ENCODE measurements at regions of chr2 and their contacts with region 1.

Region 1: GRCh38 chr2:176140513-176141317 is 10.6 kb upstream of the HOXD4 start:
- DNase-seq: peak; percentile 68
- H3K4me3 ChIP-seq: peak overlapping the region; percentile 57
- H3K27ac ChIP-seq: no peak overlapping the region
- H3K4me1 ChIP-seq: peaks cover 3% of the 10 kb centered on the region
- CTCF ChIP-seq: peak; percentile 80

Region 2: GRCh38 chr2:175957845-175958244 is 182.9 kb before region 1 on chr2:
- CTCF ChIA-PET with region 1: no interaction called
- POLR2A ChIA-PET with region 1: no interaction called
- intact Hi-C with region 1: no loop called
- DNase-seq: no peak
- H3K4me3 ChIP-seq: no peak overlapping the region
- H3K27ac ChIP-seq: no peak overlapping the region
- H3K4me1 ChIP-seq: no peaks in the 10 kb centered on the region
- CTCF ChIP-seq: no peak

Region 3: DNA sequence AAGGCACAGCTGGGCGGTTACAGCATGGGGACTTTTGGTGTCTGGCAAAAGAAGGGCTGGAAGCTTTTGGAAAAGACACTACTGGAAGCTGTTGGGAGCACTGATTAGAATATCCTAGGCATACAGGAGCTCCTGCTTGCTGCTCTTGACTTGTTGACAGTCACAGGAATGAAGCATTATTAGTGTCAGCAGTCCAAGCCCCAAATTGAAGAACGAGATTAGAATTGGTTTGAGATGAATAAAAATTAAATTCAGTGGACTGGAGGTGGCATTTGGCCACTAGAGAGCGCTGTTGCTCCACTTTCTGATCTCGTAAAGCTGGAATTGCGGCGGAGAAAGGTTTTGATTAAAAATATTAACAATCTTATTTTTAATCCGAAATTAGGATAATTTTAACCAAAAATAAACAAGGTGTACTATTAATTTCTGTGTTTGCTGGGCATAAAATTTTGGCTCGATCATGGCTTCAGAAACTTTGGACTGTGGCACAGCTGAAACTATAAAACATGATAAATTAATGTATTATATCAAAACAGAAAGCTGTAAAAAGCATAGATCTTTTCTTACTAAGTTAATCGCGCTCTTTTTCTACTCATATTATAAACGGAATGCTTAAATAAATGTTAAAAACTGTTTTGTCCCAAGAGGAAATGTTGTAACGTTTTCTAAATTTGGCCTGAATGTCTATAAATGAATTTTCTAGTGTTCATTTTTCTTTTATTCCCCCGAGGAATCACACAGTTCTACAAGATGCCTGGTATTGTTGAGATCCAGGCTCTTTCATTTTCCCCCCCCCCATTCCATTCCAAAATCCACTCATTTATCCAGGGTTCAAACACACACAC is 13.6 kb before region 1 on chr2:
- CTCF ChIA-PET with region 1: no interaction called
- POLR2A ChIA-PET with region 1: no interaction called
- intact Hi-C with region 1: no loop called
- DNase-seq: peak; percentile 66
- H3K4me3 ChIP-seq: no peak overlapping the region
- H3K27ac ChIP-seq: no peak overlapping the region
- H3K4me1 ChIP-seq: no peaks in the 10 kb centered on the region
- CTCF ChIP-seq: peak; percentile 99

Region 4: GRCh38 chr2:176454893-176455811 is 314.4 kb after region 1 on chr2:
- CTCF ChIA-PET with region 1: interaction called, 3 read pairs
- POLR2A ChIA-PET with region 1: interaction called, 3 read pairs
- intact Hi-C with region 1: loop called (anchors 1 kb)
- DNase-seq: peak; percentile 73
- H3K4me3 ChIP-seq: no peak overlapping the region
- H3K27ac ChIP-seq: no peak overlapping the region
- H3K4me1 ChIP-seq: no peaks in the 10 kb centered on the region
- CTCF ChIP-seq: peak; percentile 94

Region 5: DNA sequence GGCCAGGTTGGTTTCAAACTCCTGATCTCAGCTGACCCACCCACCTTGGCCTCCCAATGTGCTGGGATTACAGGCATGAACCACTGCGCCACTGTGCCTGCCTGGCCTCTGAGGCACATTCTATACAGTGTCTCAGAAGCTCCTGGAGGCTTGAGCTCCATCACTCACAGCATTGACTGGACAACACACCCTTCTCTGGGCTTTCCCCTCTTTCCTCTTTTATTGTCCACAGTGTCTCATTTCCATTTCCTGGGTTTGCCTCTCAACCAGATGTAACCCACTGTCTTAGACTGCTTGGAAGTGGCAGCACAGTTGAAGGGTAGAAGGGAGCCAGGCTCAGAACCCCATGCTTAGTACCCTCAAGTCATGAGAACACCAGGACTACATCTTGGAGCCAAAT is 336.6 kb after region 1 on chr2:
- CTCF ChIA-PET with region 1: interaction called, 14 read pairs
- POLR2A ChIA-PET with region 1: no interaction called
- intact Hi-C with region 1: no loop called
- DNase-seq: no peak
- H3K4me3 ChIP-seq: no peak overlapping the region
- H3K27ac ChIP-seq: no peak overlapping the region
- H3K4me1 ChIP-seq: no peaks in the 10 kb centered on the region
- CTCF ChIP-seq: no peak

Region 6: DNA sequence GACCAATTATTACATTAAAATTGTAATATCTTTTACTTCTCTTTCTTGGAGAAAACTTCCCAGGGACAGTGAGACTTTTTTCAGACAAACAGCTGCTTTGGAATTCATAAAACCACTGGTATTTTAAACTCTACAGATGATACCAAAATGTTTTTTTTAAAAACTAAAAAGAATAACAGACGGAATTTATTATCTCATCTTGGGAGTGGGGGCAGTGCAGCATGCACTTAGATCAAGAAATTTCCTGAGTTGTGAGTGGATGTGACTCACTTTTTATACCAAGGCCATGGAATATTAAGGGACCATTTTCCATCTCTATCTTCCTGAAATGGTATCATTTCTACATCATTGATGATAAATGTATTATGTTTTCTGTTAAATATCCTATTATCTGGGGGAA is 649.0 kb after region 1 on chr2:
- CTCF ChIA-PET with region 1: no interaction called
- POLR2A ChIA-PET with region 1: no interaction called
- intact Hi-C with region 1: no loop called
- DNase-seq: no peak
- H3K4me3 ChIP-seq: no peak overlapping the region
- H3K27ac ChIP-seq: no peak overlapping the region
- H3K4me1 ChIP-seq: peaks cover 28% of the 10 kb centered on the region
- CTCF ChIP-seq: no peak

Region 7: GRCh38 chr2:176804392-176804791 is 663.7 kb after region 1 on chr2:
- CTCF ChIA-PET with region 1: no interaction called
- POLR2A ChIA-PET with region 1: interaction called, 10 read pairs
- intact Hi-C with region 1: no loop called
- DNase-seq: no peak
- H3K4me3 ChIP-seq: no peak overlapping the region
- H3K27ac ChIP-seq: no peak overlapping the region
- H3K4me1 ChIP-seq: peaks cover 7% of the 10 kb centered on the region
- CTCF ChIP-seq: no peak